ENCODE measurements at regions of chr17 and their contacts with region 1.

Region 1: DNA sequence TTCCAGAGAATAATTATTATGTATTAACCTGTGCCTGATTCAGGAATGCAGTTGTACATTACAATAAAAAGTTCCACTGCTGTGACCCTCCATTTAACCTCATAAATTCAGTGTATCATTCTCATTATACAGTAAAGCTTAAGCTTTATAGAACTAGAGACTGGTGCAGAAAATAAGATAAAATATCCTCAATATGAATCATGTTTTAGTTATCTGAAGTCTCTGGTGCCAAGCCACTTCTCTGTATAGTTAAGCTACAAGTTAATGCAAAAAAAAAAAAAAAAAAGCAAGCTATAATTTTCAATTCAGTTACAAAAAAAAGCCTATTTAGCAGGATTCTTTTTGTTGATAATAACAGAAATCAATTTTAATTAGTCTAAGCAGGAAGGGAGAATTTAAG is 22.4 kb upstream of the SMIM36 start:
- DNase-seq: no peak
- H3K4me3 ChIP-seq: no peak overlapping the region
- H3K27ac ChIP-seq: no peak overlapping the region
- H3K4me1 ChIP-seq: no peaks in the 10 kb centered on the region
- H3K27me3 ChIP-seq: no peaks in the 10 kb centered on the region

Region 2: GRCh38 chr17:55426546-55427410 is 106.8 kb before region 1 on chr17:
- CTCF ChIA-PET with region 1: no interaction called
- POLR2A ChIA-PET with region 1: no interaction called
- DNase-seq: no peak
- H3K4me3 ChIP-seq: no peak overlapping the region
- H3K27ac ChIP-seq: no peak overlapping the region
- H3K4me1 ChIP-seq: peaks cover 0 to 11% (median 4%) of the 10 kb centered on the region in 4 experiments
- H3K27me3 ChIP-seq: no peaks in the 10 kb centered on the region

Region 3: GRCh38 chr17:55601874-55602364 is 68.3 kb after region 1 on chr17:
- CTCF ChIA-PET with region 1: interaction called, 122 read pairs
- POLR2A ChIA-PET with region 1: no interaction called
- DNase-seq: peak; percentile 41 to 72 (median 49)
- H3K4me3 ChIP-seq: no peak overlapping the region
- H3K27ac ChIP-seq: no peak overlapping the region
- H3K4me1 ChIP-seq: no peaks in the 10 kb centered on the region
- H3K27me3 ChIP-seq: no peaks in the 10 kb centered on the region

Region 4: DNA sequence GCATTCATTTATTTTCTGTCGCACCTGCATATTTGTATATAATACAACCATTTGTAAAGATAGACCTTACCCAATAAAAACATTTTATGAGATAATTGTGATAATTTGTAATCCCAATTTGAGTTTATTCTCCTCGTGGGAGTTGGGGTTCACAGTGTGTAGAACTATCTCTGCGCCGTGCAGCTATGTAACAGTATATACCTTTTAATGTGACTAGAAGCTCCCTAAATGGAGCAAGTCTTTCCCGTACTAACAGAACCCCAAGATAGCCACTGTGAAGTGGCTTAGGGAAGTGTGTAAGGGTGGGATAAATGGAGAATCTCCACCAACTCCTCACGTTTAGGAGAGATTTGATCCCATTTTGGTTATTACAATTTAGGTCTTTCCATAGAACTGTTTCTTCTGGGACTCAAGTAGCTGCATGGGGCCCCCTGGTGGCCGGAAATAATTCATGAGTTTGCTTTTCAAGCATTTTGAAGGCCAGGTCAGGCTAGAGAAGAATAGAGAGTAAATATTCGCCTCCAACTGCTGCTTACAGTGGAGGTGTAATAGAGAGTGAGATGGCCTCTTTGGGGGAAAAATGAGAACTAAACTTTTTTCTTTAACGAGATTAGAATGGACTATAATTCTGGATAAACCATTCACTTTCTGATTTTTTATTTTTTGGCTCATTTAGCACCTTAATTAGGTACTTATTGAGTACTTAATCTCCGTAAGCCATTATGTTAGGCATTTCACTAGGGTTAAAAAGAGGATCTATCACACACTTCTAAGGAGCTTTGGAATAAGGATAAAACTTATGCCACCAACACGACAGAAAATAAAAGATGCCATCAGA is 184.5 kb after region 1 on chr17:
- CTCF ChIA-PET with region 1: interaction called, 12 read pairs
- POLR2A ChIA-PET with region 1: no interaction called
- DNase-seq: peak; percentile 61 to 82 (median 75)
- H3K4me3 ChIP-seq: no peak overlapping the region
- H3K27ac ChIP-seq: no peak overlapping the region
- H3K4me1 ChIP-seq: no peaks in the 10 kb centered on the region
- H3K27me3 ChIP-seq: peaks cover 0 to 7% (median 4%) of the 10 kb centered on the region in 5 experiments

Measured in common myeloid progenitor, CD34-positive (primary cell).